ENCODE measurements at regions of chr2 and their contacts with region 1.

Region 1: DNA sequence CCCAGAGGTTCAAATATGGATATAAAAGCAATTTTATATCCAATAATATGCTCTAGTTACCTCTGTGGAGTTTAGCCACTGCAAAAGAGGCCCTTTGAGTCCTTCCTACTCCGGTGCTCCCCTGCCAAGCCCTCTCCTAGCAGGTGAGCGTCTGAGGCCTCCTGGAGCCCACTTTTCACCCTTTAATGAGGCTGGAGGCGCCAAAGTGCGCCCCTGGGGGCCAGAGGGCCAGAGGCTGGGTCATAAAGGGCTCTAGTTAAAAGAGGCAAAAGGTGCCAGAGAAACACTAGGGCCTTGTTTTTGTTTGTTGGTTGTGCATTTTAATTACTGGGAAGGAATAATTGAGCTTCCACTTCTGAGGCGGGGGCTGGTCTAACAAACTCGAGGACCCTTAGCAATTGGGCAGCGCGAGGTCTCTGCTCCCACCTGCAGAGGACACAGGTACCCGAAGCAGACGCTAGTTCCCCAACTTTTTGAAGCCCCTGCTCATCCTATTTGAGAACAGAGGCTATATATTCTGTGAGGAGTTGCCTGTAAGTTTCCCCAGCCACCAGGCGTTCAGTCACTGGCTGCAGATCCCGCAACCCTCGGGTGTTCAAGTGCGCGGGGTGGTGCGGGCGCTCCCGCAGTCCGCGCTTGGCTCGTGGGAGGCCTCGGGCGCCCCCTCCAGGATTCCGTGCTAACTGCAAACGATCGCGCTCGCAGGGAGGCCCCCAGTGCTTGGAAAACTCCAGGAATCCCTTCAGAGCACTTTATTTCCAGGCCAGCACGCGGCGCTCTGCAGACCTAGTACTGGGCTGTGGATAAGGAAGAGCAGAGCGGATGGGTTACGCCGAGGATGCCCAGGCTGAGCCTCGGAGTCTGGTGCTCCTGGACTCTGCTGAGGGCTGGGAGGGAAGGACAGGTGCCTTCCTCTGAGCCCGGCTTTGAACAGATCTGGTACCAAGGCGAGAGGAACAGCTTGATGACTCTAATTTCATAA is 14.1 kb downstream of the MSGN1 start:
- DNase-seq: peak; percentile 85 to 99
- H3K4me3 ChIP-seq: peak overlapping the region in 2 of 4 experiments; percentile 23 to 48; a peak in 3 of 8 replicates
- H3K27ac ChIP-seq: no peak overlapping the region
- H3K4me1 ChIP-seq: no peaks in the 10 kb centered on the region; a peak in 1 of 7 replicates
- H3K27me3 ChIP-seq: peaks cover 2 to 23% (median 17%) of the 10 kb centered on the region in 4 experiments
- CTCF ChIP-seq: peak; percentile 78 to 98 (median 97)
- EP300 ChIP-seq: peak in 1 of 2 experiments; percentile 27; a peak in 1 of 3 replicates
- POLR2A ChIP-seq: no peak
- RAD21 ChIP-seq: peak; percentile 72 to 79

Region 2: DNA sequence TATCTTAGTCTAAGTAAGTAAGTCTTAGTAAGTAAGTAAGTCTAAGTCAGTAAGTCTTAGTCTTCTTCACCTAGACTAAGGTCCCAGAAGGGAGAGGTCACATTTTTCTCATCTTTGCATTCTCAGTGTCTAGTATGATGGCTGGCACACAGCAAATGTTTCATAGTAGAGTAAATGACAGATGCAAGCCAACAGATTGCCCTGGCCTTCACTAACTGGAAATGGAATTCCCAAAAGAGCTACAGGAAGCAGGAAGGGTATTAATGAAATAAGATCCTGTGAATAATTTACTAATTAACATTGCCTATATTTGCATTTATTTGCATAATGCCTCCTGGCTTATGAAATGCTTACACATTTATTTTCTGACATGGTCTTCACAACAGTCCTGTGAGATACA is 533.7 kb before region 1 on chr2:
- CTCF ChIA-PET with region 1: no interaction called
- POLR2A ChIA-PET with region 1: no interaction called
- DNase-seq: no peak
- H3K4me3 ChIP-seq: no peak overlapping the region
- H3K27ac ChIP-seq: no peak overlapping the region
- H3K4me1 ChIP-seq: peaks cover 0 to 6% (median 2%) of the 10 kb centered on the region in 4 experiments; a peak in 3 of 7 replicates
- H3K27me3 ChIP-seq: no peaks in the 10 kb centered on the region
- CTCF ChIP-seq: no peak
- EP300 ChIP-seq: no peak
- POLR2A ChIP-seq: no peak
- RAD21 ChIP-seq: no peak

Region 3: GRCh38 chr2:17804358-17804757 is 26.0 kb before region 1 on chr2:
- CTCF ChIA-PET with region 1: interaction called, 11 read pairs
- POLR2A ChIA-PET with region 1: no interaction called
- DNase-seq: no peak
- H3K4me3 ChIP-seq: no peak overlapping the region
- H3K27ac ChIP-seq: no peak overlapping the region
- H3K4me1 ChIP-seq: no peaks in the 10 kb centered on the region
- H3K27me3 ChIP-seq: no peaks in the 10 kb centered on the region
- CTCF ChIP-seq: no peak
- EP300 ChIP-seq: no peak
- POLR2A ChIP-seq: no peak
- RAD21 ChIP-seq: no peak

Region 4: GRCh38 chr2:17813742-17814473 is 16.4 kb before region 1 on chr2:
- CTCF ChIA-PET with region 1: interaction called, 17 read pairs
- POLR2A ChIA-PET with region 1: no interaction called
- DNase-seq: no peak
- H3K4me3 ChIP-seq: no peak overlapping the region
- H3K27ac ChIP-seq: no peak overlapping the region
- H3K4me1 ChIP-seq: peaks cover 0 to 9% (median 1%) of the 10 kb centered on the region in 4 experiments; a peak in 4 of 7 replicates
- H3K27me3 ChIP-seq: peaks cover 0 to 2% (median under 1%) of the 10 kb centered on the region in 4 experiments; a peak in 2 of 7 replicates
- CTCF ChIP-seq: no peak
- EP300 ChIP-seq: no peak
- POLR2A ChIP-seq: no peak
- RAD21 ChIP-seq: no peak

Region 5: DNA sequence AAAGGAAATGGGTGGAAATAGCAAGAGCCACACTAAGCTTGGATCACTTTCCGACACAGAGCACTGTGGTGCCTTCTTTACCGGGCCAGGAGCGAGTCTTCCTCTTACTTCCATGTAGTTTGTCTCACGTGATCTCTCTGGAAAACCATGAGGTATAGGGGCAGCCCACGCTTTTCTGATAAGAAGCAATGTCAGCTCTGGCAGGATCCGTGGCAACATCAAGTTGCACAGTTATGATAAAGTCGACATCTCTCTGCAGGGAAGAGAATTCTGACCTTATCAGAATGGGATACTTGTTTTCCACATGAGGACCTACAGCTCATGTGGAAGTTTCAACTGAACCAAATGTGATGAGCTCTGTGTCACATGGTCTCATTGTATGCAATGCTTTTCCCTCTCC is 15.5 kb after region 1 on chr2:
- CTCF ChIA-PET with region 1: interaction called, 32 read pairs
- POLR2A ChIA-PET with region 1: no interaction called
- DNase-seq: no peak
- H3K4me3 ChIP-seq: no peak overlapping the region
- H3K27ac ChIP-seq: no peak overlapping the region
- H3K4me1 ChIP-seq: no peaks in the 10 kb centered on the region
- H3K27me3 ChIP-seq: no peaks in the 10 kb centered on the region
- CTCF ChIP-seq: no peak
- EP300 ChIP-seq: no peak
- POLR2A ChIP-seq: no peak
- RAD21 ChIP-seq: no peak

Region 6: DNA sequence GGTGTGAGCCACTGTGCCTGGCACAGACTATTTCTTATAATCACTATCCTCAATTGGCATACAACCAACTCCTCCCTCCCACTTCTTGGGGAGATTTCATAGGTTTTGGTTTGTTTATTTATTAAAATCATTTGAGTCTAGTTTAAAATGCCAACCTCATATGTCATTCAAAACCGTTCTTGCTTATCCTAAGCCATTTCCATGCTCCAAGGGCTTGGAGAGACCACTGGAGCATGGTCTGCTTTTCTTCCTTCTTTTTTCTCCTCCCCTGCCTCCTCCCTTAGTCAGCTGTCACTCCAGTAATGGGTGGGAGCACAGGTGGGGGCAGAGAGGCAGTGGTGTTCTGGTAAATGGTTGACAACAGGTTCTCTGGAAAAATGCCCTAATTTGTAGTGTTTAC is 27.7 kb after region 1 on chr2:
- CTCF ChIA-PET with region 1: no interaction called
- POLR2A ChIA-PET with region 1: no interaction called
- DNase-seq: no peak
- H3K4me3 ChIP-seq: no peak overlapping the region
- H3K27ac ChIP-seq: no peak overlapping the region
- H3K4me1 ChIP-seq: peaks cover 0 to 3% (median 0%) of the 10 kb centered on the region in 4 experiments; a peak in 1 of 7 replicates
- H3K27me3 ChIP-seq: no peaks in the 10 kb centered on the region
- CTCF ChIP-seq: no peak
- EP300 ChIP-seq: no peak
- POLR2A ChIP-seq: no peak
- RAD21 ChIP-seq: no peak

Region 7: DNA sequence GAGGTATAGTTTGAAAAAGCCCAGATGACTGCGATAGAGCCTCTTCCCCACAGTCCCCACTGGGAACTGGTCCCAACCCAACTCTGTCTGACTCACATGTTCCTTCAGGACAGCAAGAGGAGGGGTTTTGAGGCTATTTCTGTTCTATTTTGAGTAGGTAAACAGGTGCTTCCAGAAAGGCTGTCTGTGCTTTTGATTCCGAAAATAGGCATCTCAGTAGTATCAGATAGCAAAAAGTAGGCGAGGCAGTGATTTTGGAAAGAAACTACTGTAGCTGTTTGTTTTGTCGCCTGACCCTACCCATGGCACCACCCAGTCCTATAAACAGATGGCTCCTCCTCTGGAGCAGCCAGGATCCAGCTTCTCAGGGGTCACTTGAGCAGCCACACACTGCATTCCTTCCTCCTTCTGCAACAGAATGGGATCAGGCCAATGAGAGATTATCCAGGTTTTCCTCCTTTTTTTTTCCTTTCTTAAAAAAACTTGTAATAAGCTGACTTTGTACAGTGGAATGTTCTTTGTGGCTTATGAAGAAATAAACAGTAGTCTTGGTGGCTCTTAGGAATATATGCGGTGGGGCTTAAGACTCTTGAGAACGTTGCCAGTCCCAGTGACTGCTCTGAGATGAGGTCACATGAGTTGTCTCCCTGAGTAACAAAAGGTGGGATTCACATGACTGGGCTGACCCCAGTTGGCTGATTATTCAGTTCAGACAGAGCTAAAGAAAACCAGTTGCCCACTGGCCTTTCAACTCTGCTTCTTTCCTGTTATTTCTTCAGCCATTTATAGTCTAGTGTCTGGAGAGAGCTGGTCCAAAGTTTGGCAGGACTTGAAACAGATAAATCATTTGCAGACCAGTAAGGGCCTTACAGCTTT is 146.8 kb after region 1 on chr2:
- CTCF ChIA-PET with region 1: no interaction called
- POLR2A ChIA-PET with region 1: no interaction called
- DNase-seq: no peak
- H3K4me3 ChIP-seq: no peak overlapping the region
- H3K27ac ChIP-seq: no peak overlapping the region
- H3K4me1 ChIP-seq: no peaks in the 10 kb centered on the region
- H3K27me3 ChIP-seq: no peaks in the 10 kb centered on the region
- CTCF ChIP-seq: no peak
- EP300 ChIP-seq: no peak
- POLR2A ChIP-seq: no peak
- RAD21 ChIP-seq: no peak

Region 8: GRCh38 chr2:18117592-18117991 is 287.2 kb after region 1 on chr2:
- CTCF ChIA-PET with region 1: interaction called, 10 read pairs
- POLR2A ChIA-PET with region 1: no interaction called
- DNase-seq: peak in 1 of 2 experiments; percentile 56
- H3K4me3 ChIP-seq: no peak overlapping the region
- H3K27ac ChIP-seq: no peak overlapping the region
- H3K4me1 ChIP-seq: no peaks in the 10 kb centered on the region
- H3K27me3 ChIP-seq: no peaks in the 10 kb centered on the region
- CTCF ChIP-seq: peak; percentile 62 to 73 (median 72)
- EP300 ChIP-seq: no peak
- POLR2A ChIP-seq: no peak
- RAD21 ChIP-seq: peak; percentile 75 to 83